ENCODE measurements at regions of chr3 and their contacts with region 1.

Region 1: DNA sequence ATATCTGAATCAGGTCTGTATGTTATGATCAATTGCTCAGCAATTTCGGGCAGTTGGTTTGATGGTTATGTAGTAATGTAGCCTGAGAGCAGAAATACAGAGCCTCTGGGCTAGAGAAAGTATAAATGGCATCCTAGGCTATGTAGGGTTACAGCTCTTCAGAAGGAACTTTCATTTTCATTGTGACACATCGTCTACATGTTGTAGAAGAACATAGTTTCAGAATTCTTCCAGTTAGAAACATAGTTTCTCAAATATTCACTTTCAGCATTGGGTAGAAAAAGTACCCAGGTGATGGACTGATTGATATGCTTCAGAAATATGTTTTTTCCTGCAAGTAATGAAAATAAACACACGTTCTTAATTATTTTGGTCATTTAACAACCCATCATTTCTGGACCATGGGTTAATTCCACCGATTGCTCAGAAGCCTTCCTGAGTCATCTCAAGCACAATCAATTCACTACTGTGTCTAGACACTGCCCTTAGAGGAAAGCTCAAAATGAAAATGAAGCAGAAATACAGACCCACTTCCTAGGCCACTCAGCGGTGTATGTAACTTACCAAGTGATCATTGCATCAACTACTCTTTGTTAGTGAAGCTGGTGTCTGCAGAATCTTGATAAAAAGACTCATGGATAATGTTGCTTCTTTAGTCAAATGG is 88.8 kb upstream of the TSEN2 start:
- DNase-seq: peak; percentile 48 to 74 (median 57)
- H3K4me3 ChIP-seq: peak overlapping the region in 1 of 3 experiments; percentile 10
- H3K4me3 Mint-ChIP-seq: no peak overlapping the region
- H3K27ac ChIP-seq: peak overlapping the region in 1 of 2 donors; percentile 72
- H3K27ac Mint-ChIP-seq: peak overlapping the region; percentile 33 to 89 (median 83)
- H3K4me1 ChIP-seq: peaks cover 60 to 62% of the 10 kb centered on the region in 2 donors
- H3K4me1 Mint-ChIP-seq: peaks cover 56% of the 10 kb centered on the region
- H3K27me3 ChIP-seq: no peaks in the 10 kb centered on the region
- H3K27me3 Mint-ChIP-seq: peaks cover 0 to 5% (median 3%) of the 10 kb centered on the region in 3 donors
- CTCF ChIP-seq: no peak

Region 2: GRCh38 chr3:12187448-12188327 is 207.8 kb before region 1 on chr3:
- intact Hi-C with region 1: loop called (anchors 10 kb)
- DNase-seq: peak; percentile 81 to 90 (median 90)
- H3K4me3 ChIP-seq: peak overlapping the region; percentile 5 to 69 (median 27)
- H3K4me3 Mint-ChIP-seq: peak overlapping the region; percentile 74 to 93
- H3K27ac ChIP-seq: peak overlapping the region; percentile 97 to 98
- H3K27ac Mint-ChIP-seq: peak overlapping the region; percentile 98 to 100 (median 100)
- H3K4me1 ChIP-seq: peaks cover 69 to 72% of the 10 kb centered on the region in 2 donors
- H3K4me1 Mint-ChIP-seq: peaks cover 77% of the 10 kb centered on the region
- H3K27me3 ChIP-seq: no peaks in the 10 kb centered on the region
- H3K27me3 Mint-ChIP-seq: peaks cover 0 to 6% (median 0%) of the 10 kb centered on the region in 3 donors
- CTCF ChIP-seq: no peak

Region 3: GRCh38 chr3:12193485-12194165 is 201.9 kb before region 1 on chr3:
- intact Hi-C with region 1: loop called (anchors 10 kb)
- DNase-seq: peak; percentile 95 to 99 (median 97)
- H3K4me3 ChIP-seq: peak overlapping the region in 1 of 3 experiments; percentile 41
- H3K4me3 Mint-ChIP-seq: peak overlapping the region; percentile 8 to 64
- H3K27ac ChIP-seq: peak overlapping the region; percentile 74 to 95
- H3K27ac Mint-ChIP-seq: peak overlapping the region; percentile 97 to 99 (median 97)
- H3K4me1 ChIP-seq: peaks cover 73 to 76% of the 10 kb centered on the region in 2 donors
- H3K4me1 Mint-ChIP-seq: peaks cover 73% of the 10 kb centered on the region
- H3K27me3 ChIP-seq: no peaks in the 10 kb centered on the region
- H3K27me3 Mint-ChIP-seq: peaks cover 0 to 5% (median 0%) of the 10 kb centered on the region in 3 donors
- CTCF ChIP-seq: no peak

Region 4: DNA sequence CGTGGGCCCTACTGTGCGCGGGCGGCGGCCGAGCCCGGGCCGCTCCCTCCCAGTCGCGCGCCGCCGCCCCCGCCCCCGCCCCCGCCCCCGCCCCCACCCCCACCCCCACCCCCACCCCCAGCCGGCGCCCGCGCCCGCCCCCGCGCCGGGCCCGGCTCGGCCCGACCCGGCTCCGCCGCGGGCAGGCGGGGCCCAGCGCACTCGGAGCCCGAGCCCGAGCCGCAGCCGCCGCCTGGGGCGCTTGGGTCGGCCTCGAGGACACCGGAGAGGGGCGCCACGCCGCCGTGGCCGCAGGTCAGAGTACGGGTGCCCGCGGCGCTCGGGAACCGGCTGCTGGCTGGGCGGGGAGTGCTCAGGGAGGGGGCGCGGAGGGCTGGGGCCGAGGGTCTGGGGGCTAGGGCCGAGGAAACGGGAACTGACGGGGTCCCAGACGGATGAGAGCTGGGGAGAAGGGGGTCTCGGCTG is 107.7 kb before region 1 on chr3:
- intact Hi-C with region 1: loop called in 1 of 2 experiments (anchors 10 kb)
- DNase-seq: peak; percentile 47 to 60 (median 54)
- H3K4me3 ChIP-seq: peak overlapping the region; percentile 50 to 80 (median 78)
- H3K4me3 Mint-ChIP-seq: peak overlapping the region; percentile 85 to 88
- H3K27ac ChIP-seq: peak overlapping the region in 1 of 2 donors; percentile 61
- H3K27ac Mint-ChIP-seq: peak overlapping the region in 6 of 7 donors; percentile 70 to 96 (median 77)
- H3K4me1 ChIP-seq: peaks cover 16 to 17% of the 10 kb centered on the region in 2 donors
- H3K4me1 Mint-ChIP-seq: peaks cover 18% of the 10 kb centered on the region
- H3K27me3 ChIP-seq: peaks cover 20 to 32% of the 10 kb centered on the region in 2 donors
- H3K27me3 Mint-ChIP-seq: peaks cover 38 to 52% (median 38%) of the 10 kb centered on the region in 3 donors
- CTCF ChIP-seq: no peak

Region 5: DNA sequence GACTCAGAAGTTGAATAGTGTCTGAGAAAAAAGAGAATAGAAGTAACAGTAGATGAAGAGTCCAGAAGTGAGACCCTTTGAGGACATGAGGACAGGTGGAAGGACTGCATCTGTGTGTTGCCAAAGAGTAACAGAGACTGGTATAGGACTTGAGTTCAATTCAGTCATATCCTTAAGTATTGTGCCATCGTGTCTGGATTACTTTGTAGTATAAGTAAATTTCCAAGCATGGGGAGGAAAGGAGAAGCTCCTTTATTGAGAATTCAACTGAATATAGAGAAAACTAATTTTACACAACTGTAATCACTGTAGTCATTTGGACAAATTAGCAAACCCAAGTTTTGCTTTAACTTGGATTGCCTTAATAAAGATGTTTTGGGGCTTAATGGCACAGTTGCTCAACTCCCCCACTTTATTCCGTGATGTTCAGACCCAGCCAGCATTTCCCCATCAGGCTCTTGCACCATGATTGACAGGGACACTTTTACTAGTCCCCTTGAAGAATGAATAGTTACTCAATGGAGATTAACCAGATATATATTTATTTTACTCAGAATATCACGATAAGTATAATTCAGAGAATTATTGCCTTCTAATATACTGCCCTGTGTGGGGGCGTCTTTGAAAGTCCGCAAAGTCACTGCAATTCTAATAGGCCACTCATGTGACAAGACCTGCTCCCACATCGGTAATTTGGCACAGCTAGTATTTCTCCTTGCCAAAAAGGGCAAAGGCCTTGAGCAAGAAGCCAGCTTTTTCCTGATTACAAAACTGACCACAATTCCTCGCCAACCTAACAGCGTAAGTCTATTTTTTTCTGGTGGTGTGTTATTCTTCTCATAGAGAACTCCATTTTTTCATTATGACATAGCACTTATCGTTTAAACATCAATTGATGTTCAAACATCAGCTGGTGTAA is 45.3 kb before region 1 on chr3:
- intact Hi-C with region 1: loop called (anchors 5 kb)
- DNase-seq: peak; percentile 66 to 88 (median 74)
- H3K4me3 ChIP-seq: no peak overlapping the region
- H3K4me3 Mint-ChIP-seq: no peak overlapping the region
- H3K27ac ChIP-seq: peak overlapping the region; percentile 6 to 52
- H3K27ac Mint-ChIP-seq: peak overlapping the region; percentile 84 to 93 (median 89)
- H3K4me1 ChIP-seq: peaks cover 55 to 62% of the 10 kb centered on the region in 2 donors
- H3K4me1 Mint-ChIP-seq: peaks cover 63% of the 10 kb centered on the region
- H3K27me3 ChIP-seq: no peaks in the 10 kb centered on the region
- H3K27me3 Mint-ChIP-seq: peaks cover 0 to 2% (median 0%) of the 10 kb centered on the region in 3 donors
- CTCF ChIP-seq: no peak

Region 6: DNA sequence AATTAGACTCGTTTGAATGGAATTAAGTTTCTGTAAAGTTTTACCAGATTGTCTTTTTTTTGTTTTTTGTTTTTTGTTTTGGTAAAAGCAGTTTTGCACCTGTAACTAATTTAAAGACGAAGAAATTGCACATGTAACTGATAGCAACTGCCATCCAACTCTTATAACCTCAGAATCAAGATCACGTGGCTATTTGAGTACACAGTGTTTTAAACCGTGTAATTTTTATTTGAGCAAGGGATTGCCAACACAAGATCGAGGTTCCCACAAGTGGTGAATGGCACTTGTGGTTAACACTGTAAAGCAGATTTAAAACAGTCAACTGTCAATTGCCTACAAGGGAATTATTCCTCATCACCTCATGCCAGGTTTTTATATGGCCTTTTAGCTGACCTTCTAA is 39.3 kb before region 1 on chr3:
- intact Hi-C with region 1: loop called (anchors 5 kb)
- DNase-seq: no peak
- H3K4me3 ChIP-seq: no peak overlapping the region
- H3K4me3 Mint-ChIP-seq: no peak overlapping the region
- H3K27ac ChIP-seq: peak overlapping the region in 1 of 2 donors; percentile 83
- H3K27ac Mint-ChIP-seq: peak overlapping the region in 5 of 7 donors; percentile 24 to 93 (median 90)
- H3K4me1 ChIP-seq: peaks cover 50 to 61% of the 10 kb centered on the region in 2 donors
- H3K4me1 Mint-ChIP-seq: peaks cover 68% of the 10 kb centered on the region
- H3K27me3 ChIP-seq: no peaks in the 10 kb centered on the region
- H3K27me3 Mint-ChIP-seq: no peaks in the 10 kb centered on the region
- CTCF ChIP-seq: no peak

Region 7: DNA sequence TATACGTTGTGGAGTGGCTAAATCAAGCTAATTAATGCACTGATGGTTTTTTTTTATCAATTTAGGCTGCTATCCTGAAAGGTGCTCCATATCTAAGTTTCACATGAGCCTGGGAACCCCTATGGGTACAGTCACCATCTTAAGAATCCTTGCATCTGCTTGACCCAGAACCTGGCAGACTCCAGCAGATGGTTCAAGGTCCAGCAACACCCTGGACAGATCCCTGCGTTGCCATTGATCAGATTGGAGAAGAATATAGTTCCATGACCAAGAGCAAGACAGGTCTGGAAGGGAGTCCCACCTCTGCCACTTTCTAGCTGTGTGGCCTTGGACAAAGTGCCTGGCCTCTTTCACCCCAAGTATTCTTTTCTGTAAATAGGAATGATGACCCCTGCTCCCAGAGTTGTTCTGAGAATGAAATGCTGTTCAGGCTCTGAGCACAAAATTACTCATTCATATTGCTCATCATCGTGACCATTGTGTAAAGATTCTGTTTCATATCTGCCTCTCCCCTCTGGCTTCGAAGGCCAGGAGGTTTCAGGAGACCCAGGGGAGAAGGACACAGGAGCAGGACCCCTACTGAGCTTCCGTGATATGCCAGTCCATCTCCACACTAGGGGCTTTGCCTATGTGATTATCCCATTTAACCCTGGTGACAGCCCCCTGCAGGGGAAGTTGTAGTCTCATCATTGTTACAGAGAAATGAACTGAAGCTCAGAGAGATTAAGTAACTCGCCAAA is 58.8 kb after region 1 on chr3:
- intact Hi-C with region 1: loop called in 1 of 2 experiments (anchors 5 kb)
- DNase-seq: peak in 2 of 3 donors; percentile 27 to 46
- H3K4me3 ChIP-seq: no peak overlapping the region
- H3K4me3 Mint-ChIP-seq: no peak overlapping the region
- H3K27ac ChIP-seq: peak overlapping the region in 1 of 2 donors; percentile 9
- H3K27ac Mint-ChIP-seq: peak overlapping the region in 5 of 7 donors; percentile 16 to 84 (median 42)
- H3K4me1 ChIP-seq: peaks cover 24 to 40% of the 10 kb centered on the region in 2 donors
- H3K4me1 Mint-ChIP-seq: peaks cover 42% of the 10 kb centered on the region
- H3K27me3 ChIP-seq: no peaks in the 10 kb centered on the region
- H3K27me3 Mint-ChIP-seq: peaks cover 0 to 7% (median 2%) of the 10 kb centered on the region in 3 donors
- CTCF ChIP-seq: no peak

Region 8: DNA sequence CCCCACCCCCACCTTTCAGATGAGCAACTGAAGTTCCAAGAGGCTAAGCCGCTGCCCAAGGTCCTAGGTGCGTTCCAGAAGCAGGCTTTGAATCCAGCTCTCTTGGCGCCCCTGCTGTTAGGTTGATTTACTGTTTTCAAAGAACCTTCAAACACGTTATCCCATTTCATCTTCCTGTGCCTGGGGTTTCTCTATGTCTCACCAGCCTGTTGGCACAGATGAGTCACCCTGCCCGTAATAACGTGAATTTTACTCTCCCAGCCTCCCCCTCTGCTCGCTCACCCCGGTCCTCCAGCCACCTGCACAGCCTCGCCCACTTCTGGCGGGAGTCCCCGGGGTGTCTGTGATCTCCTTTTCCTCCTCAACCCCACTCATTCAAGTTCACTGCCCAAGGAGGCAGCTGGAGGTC is 75.8 kb after region 1 on chr3:
- intact Hi-C with region 1: no loop called
- DNase-seq: peak in 2 of 3 donors; percentile 31 to 74
- H3K4me3 ChIP-seq: no peak overlapping the region
- H3K4me3 Mint-ChIP-seq: no peak overlapping the region
- H3K27ac ChIP-seq: no peak overlapping the region
- H3K27ac Mint-ChIP-seq: peak overlapping the region in 2 of 7 donors; percentile 26 to 38
- H3K4me1 ChIP-seq: peaks cover 0 to 3% of the 10 kb centered on the region in 2 donors
- H3K4me1 Mint-ChIP-seq: peaks cover 11% of the 10 kb centered on the region
- H3K27me3 ChIP-seq: no peaks in the 10 kb centered on the region
- H3K27me3 Mint-ChIP-seq: peaks cover 0 to 5% (median 0%) of the 10 kb centered on the region in 3 donors
- CTCF ChIP-seq: no peak

Measured in CD14-positive monocyte (primary cell).